Activated CD4-positive, alpha-beta T cell treated with anti-CD3 and anti-CD28 coated beads, Interleukin-2, amount 10 ng/mL, durations not matched to agents 24 days and 14 days (primary cell): ENCODE measurements at regions of chr21 and their contacts with region 1.

Region 1: GRCh38 chr21:38805328-38806152 is at the start of gene ETS2:
- DNase-seq: peak; percentile 93
- H3K4me3 Mint-ChIP-seq: peak within 1 kb of the TSS; percentile 86
- H3K27ac Mint-ChIP-seq: peak within 1 kb of the TSS; percentile 95
- H3K4me1 Mint-ChIP-seq: peaks cover 29% of the 10 kb centered on the region
- H3K27me3 Mint-ChIP-seq: peaks cover 6% of the 10 kb centered on the region
- total RNA-seq, gene ETS2: 28.6 and 30.4 TPM in 2 replicates

Region 2: DNA sequence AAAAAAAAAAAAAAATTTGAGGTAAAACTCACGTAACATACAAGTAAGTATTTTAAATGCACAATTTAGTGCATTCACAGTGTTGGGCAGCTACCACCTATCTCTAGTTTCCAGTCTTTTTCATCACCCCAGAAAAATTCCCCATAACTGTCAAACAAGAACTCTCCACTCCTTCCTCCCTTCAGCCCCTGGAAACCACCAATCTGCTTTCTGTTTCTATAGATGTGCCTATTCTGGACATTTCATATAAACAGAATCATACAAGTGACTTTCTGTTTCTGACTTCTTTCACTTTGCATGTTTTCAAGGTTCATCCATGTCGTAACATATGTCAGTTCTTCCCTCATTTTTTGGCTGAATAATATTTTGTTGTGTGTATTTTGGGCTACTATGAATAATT is 24.7 kb before region 1 on chr21:
- intact Hi-C with region 1: loop called (anchors 2 kb)
- DNase-seq: peak; percentile 79
- H3K4me3 Mint-ChIP-seq: peak overlapping the region; percentile 6
- H3K27ac Mint-ChIP-seq: peak overlapping the region; percentile 51
- H3K4me1 Mint-ChIP-seq: peaks cover 33% of the 10 kb centered on the region
- H3K27me3 Mint-ChIP-seq: no peaks in the 10 kb centered on the region